ENCODE measurements at regions of chr12 and their contacts with region 1.

Region 1: GRCh38 chr12:85029456-85029855 is 6.6 kb downstream of the TSPAN19 start:
- DNase-seq: no peak
- ATAC-seq: no peak
- H3K4me3 ChIP-seq: no peak overlapping the region
- H3K27ac ChIP-seq: no peak overlapping the region
- H3K4me1 ChIP-seq: no peaks in the 10 kb centered on the region
- H3K27me3 ChIP-seq: peaks cover 0 to 2% (median 0%) of the 10 kb centered on the region in 3 donors
- CTCF ChIP-seq: peak; percentile 50

Region 2: GRCh38 chr12:84874125-84874824 is 155.2 kb before region 1 on chr12:
- intact Hi-C with region 1: loop called (anchors 2 to 5 kb)
- DNase-seq: no peak
- ATAC-seq: peak in 3 of 4 donors; percentile 37 to 77 (median 65)
- H3K4me3 ChIP-seq: no peak overlapping the region
- H3K27ac ChIP-seq: no peak overlapping the region
- H3K4me1 ChIP-seq: no peaks in the 10 kb centered on the region
- H3K27me3 ChIP-seq: no peaks in the 10 kb centered on the region
- CTCF ChIP-seq: peak; percentile 77

Measured in psoas muscle (tissue), 8 donors.